Mammary epithelial cell (primary cell): ENCODE measurements at regions of chr10 and their contacts with region 1.

Region 1: GRCh38 chr10:69014171-69014570 is 25.6 kb downstream of the KIFBP start:
- DNase-seq: peak; percentile 21
- H3K4me3 ChIP-seq: no peak overlapping the region
- H3K27ac ChIP-seq: no peak overlapping the region
- H3K4me1 ChIP-seq: no peaks in the 10 kb centered on the region
- H3K27me3 ChIP-seq: no peaks in the 10 kb centered on the region
- CTCF ChIP-seq: no peak

Region 2: GRCh38 chr10:68720793-68721672 is 293.1 kb before region 1 on chr10 and contains the start of gene CCAR1:
- CTCF ChIA-PET with region 1: no interaction called
- dilution Hi-C with region 1: no loop called
- in situ Hi-C with region 1: no loop called
- intact Hi-C with region 1: no loop called
- DNase-seq: peak; percentile 99
- H3K4me3 ChIP-seq: peak within 1 kb of the TSS; percentile 74 to 97 (median 95)
- H3K27ac ChIP-seq: peak within 1 kb of the TSS; percentile 85
- H3K4me1 ChIP-seq: peaks cover 5% of the 10 kb centered on the region
- H3K27me3 ChIP-seq: no peaks in the 10 kb centered on the region
- CTCF ChIP-seq: no peak
- total RNA-seq, gene CCAR1: 36.5 to 75.5 TPM

Region 3: DNA sequence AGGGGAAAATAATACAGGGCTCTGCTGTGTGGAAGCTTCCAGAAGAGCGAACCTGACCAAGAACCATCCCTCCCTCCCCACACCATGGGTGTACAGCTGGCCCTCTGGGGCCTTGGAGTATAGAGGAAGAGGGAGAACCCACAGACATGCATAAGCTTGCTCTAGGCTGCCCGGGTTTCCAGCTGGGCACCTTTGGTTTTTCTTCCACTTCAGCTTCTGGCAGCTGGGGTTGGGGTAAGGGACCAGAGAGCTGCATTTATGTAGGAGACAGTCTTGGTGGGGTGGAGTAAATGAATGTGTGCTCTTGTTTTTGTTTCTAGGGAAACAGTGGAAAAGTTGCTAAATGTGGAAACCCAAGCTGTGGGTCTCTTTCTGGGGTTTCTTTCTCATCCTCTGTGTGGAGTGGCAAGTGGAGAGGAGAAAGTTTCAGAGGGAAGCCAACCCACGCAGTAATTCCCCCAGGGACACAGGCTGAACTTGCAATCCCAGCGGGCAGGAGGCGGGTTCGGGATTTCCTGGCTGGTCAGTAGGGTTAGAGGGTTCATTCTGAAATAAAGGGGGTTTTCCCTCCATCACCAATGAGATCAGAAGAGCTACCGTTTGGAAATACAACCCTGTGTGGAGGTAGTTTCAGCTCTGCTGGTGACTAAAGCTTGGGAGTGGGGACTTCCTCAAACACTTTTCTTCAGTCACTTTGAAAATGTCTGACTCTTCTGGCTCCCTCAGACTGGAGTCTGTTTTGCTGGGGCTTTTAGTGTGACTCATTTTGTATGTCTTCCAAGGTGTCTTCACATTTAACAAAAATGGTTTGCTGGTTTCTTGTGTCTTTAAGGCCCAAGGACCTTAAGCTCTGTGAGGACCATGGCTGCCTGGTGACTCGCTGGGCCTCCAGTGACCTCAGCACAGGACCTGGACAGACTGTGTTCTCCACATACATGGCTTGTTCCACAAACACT is 51.5 kb after region 1 on chr10:
- CTCF ChIA-PET with region 1: no interaction called
- dilution Hi-C with region 1: loop called (anchors 5 kb)
- in situ Hi-C with region 1: no loop called
- intact Hi-C with region 1: no loop called
- DNase-seq: peak; percentile 87
- H3K4me3 ChIP-seq: no peak overlapping the region
- H3K27ac ChIP-seq: no peak overlapping the region
- H3K4me1 ChIP-seq: peaks cover 13% of the 10 kb centered on the region
- H3K27me3 ChIP-seq: no peaks in the 10 kb centered on the region
- CTCF ChIP-seq: no peak

Region 4: GRCh38 chr10:69123747-69124562 is 109.8 kb after region 1 on chr10 and contains the start of gene VPS26A:
- CTCF ChIA-PET with region 1: no interaction called
- dilution Hi-C with region 1: no loop called
- in situ Hi-C with region 1: no loop called
- intact Hi-C with region 1: no loop called
- DNase-seq: peak; percentile 99
- H3K4me3 ChIP-seq: peak within 1 kb of the TSS; percentile 81 to 96 (median 83)
- H3K27ac ChIP-seq: peak within 1 kb of the TSS; percentile 96
- H3K4me1 ChIP-seq: peaks cover 4% of the 10 kb centered on the region
- H3K27me3 ChIP-seq: no peaks in the 10 kb centered on the region
- CTCF ChIP-seq: no peak
- total RNA-seq, gene VPS26A: 30.3 to 75.8 TPM

Region 5: DNA sequence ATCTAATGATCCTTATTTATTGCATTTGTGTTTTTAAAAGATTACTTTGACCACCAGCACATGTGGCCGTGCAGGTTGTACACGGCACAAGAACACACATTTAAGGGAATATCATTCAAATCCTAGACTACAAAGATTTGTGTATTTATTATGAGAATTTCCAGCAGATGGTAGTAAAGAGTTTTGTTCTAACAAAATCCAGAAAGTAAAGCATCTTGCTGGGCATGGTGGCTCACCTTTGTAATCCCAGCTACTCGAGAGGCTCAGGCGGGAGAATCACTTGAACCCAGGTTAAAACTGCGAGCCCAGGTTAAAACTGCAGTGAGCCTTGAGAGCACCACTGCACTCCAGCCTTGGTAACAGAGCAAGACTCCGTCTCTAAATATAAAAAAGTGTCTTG is 1070.0 kb after region 1 on chr10:
- CTCF ChIA-PET with region 1: no interaction called
- dilution Hi-C with region 1: no loop called
- in situ Hi-C with region 1: no loop called
- intact Hi-C with region 1: no loop called
- DNase-seq: no peak
- H3K4me3 ChIP-seq: no peak overlapping the region
- H3K27ac ChIP-seq: no peak overlapping the region
- H3K4me1 ChIP-seq: no peaks in the 10 kb centered on the region
- H3K27me3 ChIP-seq: no peaks in the 10 kb centered on the region
- CTCF ChIP-seq: no peak